Activated B cell treated with CpG ODN at 0.5 μM for 24 hours (primary cell): ENCODE measurements at regions of chr19 and their contacts with region 1.

Region 1: GRCh38 chr19:16106121-16106520 is 5.6 kb upstream of the RAB8A start:
- DNase-seq: no peak
- ATAC-seq: no peak
- H3K4me3 Mint-ChIP-seq: no peak overlapping the region
- H3K27ac Mint-ChIP-seq: peak overlapping the region; percentile 77
- H3K4me1 Mint-ChIP-seq: peaks cover 31% of the 10 kb centered on the region
- H3K27me3 Mint-ChIP-seq: no peaks in the 10 kb centered on the region
- CTCF ChIP-seq: no peak

Region 2: DNA sequence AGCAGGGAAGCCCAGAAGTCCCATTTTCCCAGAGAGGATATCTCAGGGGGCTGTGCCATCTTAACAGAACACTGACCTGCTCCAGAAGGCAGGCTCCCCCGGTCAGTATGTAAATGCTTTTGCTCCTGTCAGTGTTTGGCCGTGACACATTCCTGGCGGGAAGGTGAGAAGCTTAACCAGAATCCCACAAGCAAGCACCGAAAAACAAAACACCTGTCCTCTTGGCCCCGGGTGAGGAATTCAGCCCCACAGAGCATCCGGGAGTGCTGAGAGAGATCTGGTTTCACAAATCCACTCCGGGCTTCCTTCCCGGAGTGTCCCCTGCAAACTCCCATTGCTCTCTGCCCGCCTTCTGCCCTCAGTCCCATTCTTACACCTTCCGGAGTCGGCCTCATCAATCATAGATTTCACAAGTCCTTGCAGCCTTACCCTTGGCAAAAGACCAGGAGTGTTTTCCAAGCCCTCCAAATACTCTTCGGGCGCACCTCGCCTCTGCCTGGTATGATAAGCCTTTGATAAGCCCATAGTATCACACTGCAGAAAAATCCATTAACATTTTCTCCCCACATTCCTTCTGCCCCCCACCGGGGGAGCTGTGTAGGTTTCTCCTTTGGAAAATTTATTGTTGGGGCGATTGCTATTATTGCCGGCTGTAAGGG is 17.6 kb before region 1 on chr19:
- CTCF ChIA-PET with region 1: interaction called, 4 read pairs
- POLR2A ChIA-PET with region 1: interaction called, 20 read pairs
- intact Hi-C with region 1: no loop called
- DNase-seq: no peak
- ATAC-seq: no peak
- H3K4me3 Mint-ChIP-seq: no peak overlapping the region
- H3K27ac Mint-ChIP-seq: no peak overlapping the region
- H3K4me1 Mint-ChIP-seq: peaks cover 22% of the 10 kb centered on the region
- H3K27me3 Mint-ChIP-seq: no peaks in the 10 kb centered on the region
- CTCF ChIP-seq: no peak

Region 3: GRCh38 chr19:16095071-16095571 is 11.0 kb before region 1 on chr19:
- CTCF ChIA-PET with region 1: interaction called, 5 read pairs
- POLR2A ChIA-PET with region 1: interaction called, 20 read pairs
- intact Hi-C with region 1: no loop called
- DNase-seq: no peak
- ATAC-seq: peak; percentile 81
- H3K4me3 Mint-ChIP-seq: no peak overlapping the region
- H3K27ac Mint-ChIP-seq: peak overlapping the region; percentile 57
- H3K4me1 Mint-ChIP-seq: peaks cover 13% of the 10 kb centered on the region
- H3K27me3 Mint-ChIP-seq: no peaks in the 10 kb centered on the region
- CTCF ChIP-seq: no peak